Calu3 (cell line): ENCODE measurements at regions of chr2 and their contacts with region 1.

Region 1: GRCh38 chr2:137865954-137866540 is 98.2 kb upstream of the HNMT start:
- DNase-seq: peak; percentile 70
- H3K4me3 Mint-ChIP-seq: no peak overlapping the region
- H3K27ac Mint-ChIP-seq: no peak overlapping the region
- H3K4me1 Mint-ChIP-seq: no peaks in the 10 kb centered on the region
- H3K27me3 Mint-ChIP-seq: no peaks in the 10 kb centered on the region
- CTCF ChIP-seq: peak; percentile 67

Region 2: GRCh38 chr2:137888845-137889244 is 22.8 kb after region 1 on chr2:
- CTCF ChIA-PET with region 1: interaction called, 18 read pairs
- intact Hi-C with region 1: loop called (anchors 1 kb)
- DNase-seq: peak; percentile 77
- H3K4me3 Mint-ChIP-seq: no peak overlapping the region
- H3K27ac Mint-ChIP-seq: no peak overlapping the region
- H3K4me1 Mint-ChIP-seq: peaks cover 8% of the 10 kb centered on the region
- H3K27me3 Mint-ChIP-seq: no peaks in the 10 kb centered on the region
- CTCF ChIP-seq: peak; percentile 52